ENCODE measurements at regions of chr1 and their contacts with region 1.

Region 1: DNA sequence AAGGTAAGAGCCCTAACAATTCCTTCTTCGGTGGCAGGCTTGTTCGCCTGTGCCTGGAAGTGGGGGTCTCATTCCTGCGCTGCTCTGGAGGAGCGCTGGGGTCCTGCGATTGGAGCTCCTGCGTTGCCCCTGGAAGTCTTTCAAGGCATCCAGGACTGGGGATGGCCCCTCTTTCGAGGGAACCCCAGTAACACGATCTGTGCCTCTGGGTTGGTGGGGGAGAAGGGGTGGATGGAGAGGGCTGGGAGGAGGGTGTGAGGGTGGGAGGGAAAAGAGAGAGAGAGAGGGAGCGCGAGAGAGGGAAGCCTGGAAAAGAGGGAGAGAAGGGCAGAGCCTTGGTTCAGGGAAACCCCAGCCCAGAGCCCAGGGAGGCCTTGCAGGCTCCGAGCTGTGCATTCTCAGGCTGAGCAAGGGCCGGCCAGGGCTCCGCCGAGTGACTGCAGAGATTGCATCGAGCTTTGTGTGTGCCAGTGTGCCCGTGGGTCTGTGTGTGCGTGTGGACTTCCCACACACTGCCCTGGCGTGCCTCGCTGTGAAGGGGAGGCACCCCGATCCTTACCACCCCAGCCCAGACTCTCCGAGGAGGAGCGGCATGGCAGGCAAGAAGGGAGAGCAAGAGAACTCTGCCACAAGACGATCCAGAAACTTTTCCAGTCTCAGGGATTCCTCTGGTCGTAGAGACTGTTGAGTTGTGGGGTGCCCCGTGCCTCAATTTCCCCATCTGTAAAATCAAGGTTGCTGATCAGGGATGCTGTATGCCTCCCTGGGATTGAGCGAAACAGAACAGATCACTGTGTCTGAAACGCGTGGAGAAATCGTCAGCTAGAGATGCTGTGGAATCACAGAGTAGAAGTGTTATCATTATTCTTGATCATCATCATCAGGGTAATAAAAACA is 619 bp downstream of the BCL9 start:
- DNase-seq: no peak
- H3K4me3 ChIP-seq: peak overlapping the region; percentile 63 to 64
- H3K27ac ChIP-seq: peak overlapping the region; percentile 93
- H3K4me1 ChIP-seq: peaks cover 79% of the 10 kb centered on the region
- H3K27me3 ChIP-seq: no peaks in the 10 kb centered on the region
- CTCF ChIP-seq: no peak
- POLR2A ChIP-seq: no peak

Region 2: GRCh38 chr1:147201276-147201675 is 340.6 kb before region 1 on chr1:
- intact Hi-C with region 1: no loop called
- DNase-seq: no peak
- H3K4me3 ChIP-seq: no peak overlapping the region
- H3K27ac ChIP-seq: no peak overlapping the region
- H3K4me1 ChIP-seq: no peaks in the 10 kb centered on the region
- H3K27me3 ChIP-seq: no peaks in the 10 kb centered on the region
- CTCF ChIP-seq: no peak
- POLR2A ChIP-seq: no peak

Region 3: GRCh38 chr1:147560756-147561471 is 19.0 kb after region 1 on chr1:
- intact Hi-C with region 1: no loop called
- DNase-seq: no peak
- H3K4me3 ChIP-seq: no peak overlapping the region
- H3K27ac ChIP-seq: no peak overlapping the region
- H3K4me1 ChIP-seq: no peaks in the 10 kb centered on the region
- H3K27me3 ChIP-seq: no peaks in the 10 kb centered on the region
- CTCF ChIP-seq: no peak
- POLR2A ChIP-seq: no peak

Region 4: GRCh38 chr1:147599362-147600118 is 57.6 kb after region 1 on chr1:
- intact Hi-C with region 1: loop called (anchors 2 kb)
- DNase-seq: peak in 1 of 2 donors; percentile 97
- H3K4me3 ChIP-seq: peak overlapping the region; percentile 71 to 89
- H3K27ac ChIP-seq: peak overlapping the region; percentile 91
- H3K4me1 ChIP-seq: peaks cover 22% of the 10 kb centered on the region
- H3K27me3 ChIP-seq: no peaks in the 10 kb centered on the region
- CTCF ChIP-seq: no peak
- POLR2A ChIP-seq: peak in 1 of 2 donors; percentile 91

Region 5: DNA sequence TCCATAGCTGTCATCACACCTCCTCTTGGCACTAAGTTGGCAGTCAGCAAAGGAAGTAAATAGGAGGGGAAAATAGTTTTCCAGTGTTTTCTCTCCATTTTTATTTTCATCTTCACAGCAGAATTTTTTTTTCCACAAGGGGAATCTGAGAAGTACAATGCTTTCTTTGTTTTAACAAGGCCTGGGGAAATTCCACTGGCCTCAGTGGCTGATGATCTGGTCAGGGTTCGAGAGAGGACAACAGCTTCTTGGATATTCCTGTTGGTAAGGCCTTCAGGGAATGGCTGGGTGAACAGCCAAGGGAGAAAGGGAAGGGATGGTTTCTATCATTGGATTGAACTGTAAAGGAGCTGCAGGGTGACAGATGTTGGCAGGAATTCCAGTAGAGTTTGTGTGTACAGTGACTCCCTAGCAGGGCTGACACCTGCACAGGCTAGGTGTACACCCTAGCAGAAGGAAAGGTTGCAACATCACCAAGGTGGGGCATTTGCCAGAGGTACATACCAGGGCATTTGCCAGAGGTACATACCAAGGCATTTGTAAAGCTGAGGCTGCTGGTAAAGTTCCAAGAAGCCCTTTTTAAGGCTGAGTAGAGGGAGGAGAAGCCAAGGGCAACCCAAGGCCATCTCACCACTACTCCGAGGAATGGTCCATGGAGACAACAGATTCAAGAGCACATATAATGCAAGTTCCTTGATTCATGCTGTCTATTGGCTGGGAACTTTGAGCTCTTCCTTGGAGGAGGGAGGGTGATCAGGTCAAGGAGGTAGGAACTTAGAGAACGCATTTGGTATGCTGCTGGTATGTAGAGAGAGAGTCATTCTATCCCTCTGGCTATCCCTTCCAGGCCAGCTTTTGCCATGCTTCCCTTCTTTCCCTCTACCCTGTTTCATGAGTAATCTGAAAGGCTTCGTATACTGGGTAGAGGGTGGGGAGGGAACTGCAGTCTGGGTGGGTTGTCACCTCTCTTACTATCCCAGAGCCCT is 215.4 kb after region 1 on chr1:
- intact Hi-C with region 1: no loop called
- DNase-seq: no peak
- H3K4me3 ChIP-seq: no peak overlapping the region
- H3K27ac ChIP-seq: no peak overlapping the region
- H3K4me1 ChIP-seq: no peaks in the 10 kb centered on the region
- H3K27me3 ChIP-seq: no peaks in the 10 kb centered on the region
- CTCF ChIP-seq: no peak
- POLR2A ChIP-seq: no peak

Measured in vagina (tissue), 2 donors.